Vagina (tissue), 2 donors: ENCODE measurements at regions of chr21 and their contacts with region 1.

Region 1: GRCh38 chr21:25871566-25871965 is 136.8 kb downstream of the GABPA start:
- DNase-seq: no peak
- H3K4me3 ChIP-seq: no peak overlapping the region
- H3K27ac ChIP-seq: no peak overlapping the region
- H3K4me1 ChIP-seq: no peaks in the 10 kb centered on the region
- H3K27me3 ChIP-seq: no peaks in the 10 kb centered on the region
- CTCF ChIP-seq: no peak
- POLR2A ChIP-seq: no peak

Region 2: GRCh38 chr21:26513212-26513611 is 641.6 kb after region 1 on chr21:
- intact Hi-C with region 1: loop called (anchors 10 kb)
- DNase-seq: no peak
- H3K4me3 ChIP-seq: no peak overlapping the region
- H3K27ac ChIP-seq: no peak overlapping the region
- H3K4me1 ChIP-seq: no peaks in the 10 kb centered on the region
- H3K27me3 ChIP-seq: no peaks in the 10 kb centered on the region
- CTCF ChIP-seq: no peak
- POLR2A ChIP-seq: no peak